ENCODE measurements at regions of chr21 and their contacts with region 1.

Region 1: DNA sequence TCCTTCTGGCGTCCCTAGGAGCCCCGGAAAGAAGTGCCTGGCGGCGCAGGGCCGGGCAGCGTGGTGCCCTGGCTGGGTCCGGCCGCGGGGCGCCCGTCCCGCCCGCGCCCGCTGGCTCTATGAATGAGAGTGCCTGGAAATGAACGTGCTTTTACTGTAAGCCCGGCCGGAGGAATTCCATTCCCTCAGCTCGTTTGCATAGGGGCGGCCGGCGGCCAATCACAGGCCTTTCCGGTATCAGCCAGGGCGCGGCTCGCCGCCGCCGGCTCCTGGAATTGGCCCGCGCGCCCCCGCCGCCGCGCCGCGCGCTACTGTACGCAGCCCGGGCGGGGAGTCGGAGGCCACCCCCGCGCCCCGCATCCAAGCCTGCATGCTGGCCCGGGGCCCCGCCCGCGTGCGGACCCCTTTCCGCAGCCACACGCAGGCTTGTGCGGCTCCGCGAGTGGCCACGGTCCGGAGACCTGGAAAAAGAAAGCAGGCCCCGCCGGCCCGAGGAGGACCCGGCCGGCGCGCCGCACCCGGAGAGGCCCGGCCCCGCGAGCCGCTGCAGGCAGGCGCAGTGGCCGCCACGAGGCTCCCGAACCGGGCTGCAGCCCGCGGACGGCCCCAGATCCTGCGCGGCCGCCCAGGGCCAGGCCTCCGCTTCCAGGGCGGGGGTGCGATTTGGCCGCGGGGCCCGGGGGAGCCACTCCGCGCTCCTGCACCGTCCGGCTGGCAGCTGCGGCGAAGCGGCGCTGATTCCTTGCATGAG is 160.4 kb downstream of the RUNX1 start:
- DNase-seq: peak; percentile 97
- ATAC-seq: peak; percentile 52
- H3K4me3 ChIP-seq: peak overlapping the region; percentile 95
- H3K27ac ChIP-seq: peak overlapping the region; percentile 90
- H3K4me1 ChIP-seq: peaks cover 16% of the 10 kb centered on the region; the same call in 1 of the 2 replicates
- H3K27me3 ChIP-seq: no peaks in the 10 kb centered on the region
- CTCF ChIP-seq: no peak

Region 2: DNA sequence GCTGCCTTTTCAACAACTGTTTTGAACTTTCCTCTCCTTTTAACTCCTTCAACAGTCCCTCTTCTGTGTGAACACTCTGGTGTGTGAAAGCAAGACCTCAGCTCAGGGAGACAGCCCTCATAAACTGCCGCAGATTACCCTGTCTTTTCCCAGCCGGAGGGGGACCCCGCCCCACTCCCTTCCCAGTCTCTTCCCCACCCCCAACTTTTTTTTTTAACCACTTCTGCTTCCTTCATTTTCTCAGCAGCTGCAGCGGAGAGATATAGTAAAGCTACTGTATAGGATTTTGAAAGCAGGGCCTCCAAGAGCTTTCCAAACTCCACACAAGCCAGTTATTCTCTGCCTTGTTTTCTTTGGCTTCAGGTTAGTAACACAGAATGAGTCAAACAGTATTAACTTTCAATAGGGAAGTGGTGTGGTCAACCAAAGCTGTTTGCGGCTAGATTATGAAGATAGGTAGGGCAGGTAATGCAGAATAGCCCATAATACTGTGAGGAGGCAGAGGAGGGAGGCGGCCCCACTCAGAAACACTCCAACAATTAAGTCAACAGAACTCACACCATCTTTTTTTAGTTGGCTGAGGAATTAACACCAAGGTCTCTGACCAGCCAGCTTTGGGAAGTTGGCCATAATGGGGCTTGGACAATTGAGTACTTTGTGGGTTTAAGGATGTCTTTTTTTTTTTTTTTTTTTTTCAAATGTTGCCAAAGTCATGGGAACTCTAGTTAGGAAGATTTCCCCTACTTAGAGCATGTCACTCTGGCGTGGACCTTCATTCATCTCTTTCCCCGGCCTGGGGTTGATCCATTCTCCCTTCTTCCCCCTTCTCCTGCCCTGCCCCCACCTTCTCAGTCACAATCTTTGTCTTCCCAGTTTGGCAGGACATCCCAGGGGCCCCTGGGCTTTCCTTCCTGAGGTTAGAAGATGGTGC is 43.0 kb before region 1 on chr21:
- CTCF ChIA-PET with region 1: no interaction called
- POLR2A ChIA-PET with region 1: interaction called, 13 read pairs
- intact Hi-C with region 1: no loop called
- DNase-seq: peak; percentile 95
- ATAC-seq: peak; percentile 85
- H3K4me3 ChIP-seq: peak overlapping the region; percentile 30; the same call in 1 of the 2 replicates
- H3K27ac ChIP-seq: peak overlapping the region; percentile 85
- H3K4me1 ChIP-seq: peaks cover 36% of the 10 kb centered on the region
- H3K27me3 ChIP-seq: no peaks in the 10 kb centered on the region
- CTCF ChIP-seq: no peak

Region 3: GRCh38 chr21:34913811-34914210 is 25.1 kb after region 1 on chr21:
- CTCF ChIA-PET with region 1: no interaction called
- POLR2A ChIA-PET with region 1: no interaction called
- intact Hi-C with region 1: no loop called
- DNase-seq: no peak
- ATAC-seq: no peak
- H3K4me3 ChIP-seq: no peak overlapping the region
- H3K27ac ChIP-seq: no peak overlapping the region
- H3K4me1 ChIP-seq: peaks cover 23% of the 10 kb centered on the region
- H3K27me3 ChIP-seq: no peaks in the 10 kb centered on the region
- CTCF ChIP-seq: no peak

Region 4: DNA sequence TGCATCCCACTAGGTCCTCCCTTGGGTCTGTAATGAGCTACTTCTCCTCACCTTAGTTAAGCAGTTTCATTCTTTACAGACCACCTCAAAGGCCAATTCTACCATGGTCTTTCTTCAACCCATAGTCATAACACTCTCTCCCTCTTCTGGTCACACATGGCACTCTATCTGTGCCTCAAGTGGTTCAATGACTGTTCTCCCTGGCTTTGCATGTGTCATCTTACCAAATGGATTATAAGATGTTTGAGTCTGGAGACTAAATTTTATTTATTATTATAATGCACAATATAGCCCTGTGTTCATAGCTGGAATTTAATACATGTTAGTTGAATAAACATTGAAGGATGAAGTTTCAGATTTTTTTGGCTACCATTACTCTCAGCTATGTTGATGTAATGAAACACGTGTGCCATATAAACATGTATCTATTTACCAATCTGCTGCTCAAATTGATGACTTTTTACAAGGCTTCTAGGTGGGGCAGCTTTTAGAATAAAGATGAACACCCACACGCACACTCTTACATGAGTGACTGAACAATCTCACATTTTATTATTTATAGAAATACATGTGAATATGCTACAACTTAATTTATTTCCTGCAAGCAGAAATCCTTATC is 58.3 kb after region 1 on chr21:
- CTCF ChIA-PET with region 1: no interaction called
- POLR2A ChIA-PET with region 1: no interaction called
- intact Hi-C with region 1: no loop called
- DNase-seq: no peak
- ATAC-seq: no peak
- H3K4me3 ChIP-seq: no peak overlapping the region
- H3K27ac ChIP-seq: no peak overlapping the region
- H3K4me1 ChIP-seq: no peaks in the 10 kb centered on the region
- H3K27me3 ChIP-seq: no peaks in the 10 kb centered on the region
- CTCF ChIP-seq: no peak

Region 5: GRCh38 chr21:35510957-35511695 is 622.4 kb after region 1 on chr21:
- CTCF ChIA-PET with region 1: interaction called, 10 read pairs
- POLR2A ChIA-PET with region 1: interaction called, 7 read pairs
- intact Hi-C with region 1: loop called (anchors 2 kb)
- DNase-seq: peak; percentile 89
- ATAC-seq: peak; percentile 87
- H3K4me3 ChIP-seq: peak overlapping the region; percentile 20; the same call in 1 of the 2 replicates
- H3K27ac ChIP-seq: peak overlapping the region; percentile 95
- H3K4me1 ChIP-seq: peaks cover 40% of the 10 kb centered on the region
- H3K27me3 ChIP-seq: no peaks in the 10 kb centered on the region
- CTCF ChIP-seq: no peak

Region 6: GRCh38 chr21:35840197-35840799 is 951.6 kb after region 1 on chr21:
- CTCF ChIA-PET with region 1: no interaction called
- POLR2A ChIA-PET with region 1: no interaction called
- intact Hi-C with region 1: loop called (anchors 1 kb)
- DNase-seq: peak; percentile 82
- ATAC-seq: peak; percentile 81
- H3K4me3 ChIP-seq: no peak overlapping the region
- H3K27ac ChIP-seq: no peak overlapping the region
- H3K4me1 ChIP-seq: no peaks in the 10 kb centered on the region
- H3K27me3 ChIP-seq: no peaks in the 10 kb centered on the region
- CTCF ChIP-seq: peak; percentile 98

Region 7: DNA sequence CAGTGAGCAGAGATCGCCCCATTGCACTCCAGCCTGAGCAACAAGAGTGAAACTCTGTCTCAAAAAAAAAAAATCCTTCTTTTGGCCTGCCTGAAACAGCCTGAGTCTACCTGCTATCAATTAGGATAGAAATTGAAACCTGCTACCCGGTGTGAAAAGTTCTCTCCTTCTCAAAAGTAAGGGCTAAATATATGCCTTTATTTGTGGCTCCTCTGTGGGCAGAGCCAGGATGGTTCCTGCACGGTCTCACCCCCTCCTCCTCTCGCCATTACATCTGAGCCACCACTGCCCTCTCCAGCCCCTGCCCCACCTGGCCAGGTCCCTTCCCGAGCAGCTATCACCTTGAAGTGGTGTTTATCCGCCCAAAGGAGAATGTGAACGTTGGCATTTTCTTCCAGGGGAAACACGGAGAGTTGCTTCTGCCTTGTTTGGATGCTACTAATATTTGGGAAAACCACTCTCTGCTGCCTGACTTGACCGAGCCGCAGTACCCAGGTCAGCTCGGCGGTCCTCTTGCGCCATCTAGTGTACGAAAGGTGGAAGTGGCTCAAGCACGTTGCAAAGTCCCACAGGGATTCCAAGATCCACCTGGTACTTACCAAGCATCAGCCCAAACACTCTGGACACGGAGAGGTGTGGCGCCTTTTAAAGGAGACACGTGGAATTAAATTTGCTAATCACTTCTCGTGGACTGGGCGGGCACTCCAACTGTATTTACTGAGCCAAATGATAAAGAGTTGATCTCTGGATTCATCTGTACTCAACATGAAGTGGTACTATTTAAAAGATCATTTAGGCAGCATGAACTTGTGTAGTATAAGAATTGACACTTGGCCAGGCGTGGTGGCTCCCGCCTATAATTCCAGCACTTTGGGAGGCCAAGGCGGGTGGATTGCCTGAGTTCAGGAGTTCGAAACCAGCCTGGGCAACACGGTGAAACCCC is 1139.7 kb after region 1 on chr21:
- CTCF ChIA-PET with region 1: no interaction called
- POLR2A ChIA-PET with region 1: interaction called, 4 read pairs
- intact Hi-C with region 1: loop called (anchors 10 kb)
- DNase-seq: peak; percentile 89
- ATAC-seq: peak; percentile 97
- H3K4me3 ChIP-seq: no peak overlapping the region
- H3K27ac ChIP-seq: no peak overlapping the region
- H3K4me1 ChIP-seq: no peaks in the 10 kb centered on the region
- H3K27me3 ChIP-seq: no peaks in the 10 kb centered on the region
- CTCF ChIP-seq: peak; percentile 97

Measured in PC-3 (cell line).